Mammary epithelial cell (primary cell): ENCODE measurements at regions of chr6 and their contacts with region 1.

Region 1: GRCh38 chr6:27893059-27893835 is 18.9 kb downstream of the OR2B2 start:
- DNase-seq: peak; percentile 97
- H3K4me3 ChIP-seq: peak overlapping the region; percentile 66 to 84 (median 74)
- H3K27ac ChIP-seq: peak overlapping the region; percentile 86
- H3K4me1 ChIP-seq: peaks cover 11% of the 10 kb centered on the region
- H3K27me3 ChIP-seq: no peaks in the 10 kb centered on the region
- CTCF ChIP-seq: no peak

Region 2: GRCh38 chr6:27132532-27133280 is 760.5 kb before region 1 on chr6:
- CTCF ChIA-PET with region 1: no interaction called
- dilution Hi-C with region 1: loop called (anchors 25 kb)
- in situ Hi-C with region 1: no loop called
- intact Hi-C with region 1: loop called (anchors 1 kb)
- DNase-seq: peak; percentile 99
- H3K4me3 ChIP-seq: peak overlapping the region; percentile 64 to 69 (median 68)
- H3K27ac ChIP-seq: peak overlapping the region; percentile 97
- H3K4me1 ChIP-seq: peaks cover 13% of the 10 kb centered on the region
- H3K27me3 ChIP-seq: no peaks in the 10 kb centered on the region
- CTCF ChIP-seq: no peak

Region 3: GRCh38 chr6:27177485-27178406 is 715.5 kb before region 1 on chr6:
- CTCF ChIA-PET with region 1: no interaction called
- dilution Hi-C with region 1: no loop called
- in situ Hi-C with region 1: loop called (anchors 25 kb)
- intact Hi-C with region 1: no loop called
- DNase-seq: peak; percentile 88
- H3K4me3 ChIP-seq: peak overlapping the region; percentile 80 to 100 (median 96)
- H3K27ac ChIP-seq: peak overlapping the region; percentile 62
- H3K4me1 ChIP-seq: peaks cover 3% of the 10 kb centered on the region
- H3K27me3 ChIP-seq: no peaks in the 10 kb centered on the region
- CTCF ChIP-seq: peak; percentile 53 to 69

Region 4: DNA sequence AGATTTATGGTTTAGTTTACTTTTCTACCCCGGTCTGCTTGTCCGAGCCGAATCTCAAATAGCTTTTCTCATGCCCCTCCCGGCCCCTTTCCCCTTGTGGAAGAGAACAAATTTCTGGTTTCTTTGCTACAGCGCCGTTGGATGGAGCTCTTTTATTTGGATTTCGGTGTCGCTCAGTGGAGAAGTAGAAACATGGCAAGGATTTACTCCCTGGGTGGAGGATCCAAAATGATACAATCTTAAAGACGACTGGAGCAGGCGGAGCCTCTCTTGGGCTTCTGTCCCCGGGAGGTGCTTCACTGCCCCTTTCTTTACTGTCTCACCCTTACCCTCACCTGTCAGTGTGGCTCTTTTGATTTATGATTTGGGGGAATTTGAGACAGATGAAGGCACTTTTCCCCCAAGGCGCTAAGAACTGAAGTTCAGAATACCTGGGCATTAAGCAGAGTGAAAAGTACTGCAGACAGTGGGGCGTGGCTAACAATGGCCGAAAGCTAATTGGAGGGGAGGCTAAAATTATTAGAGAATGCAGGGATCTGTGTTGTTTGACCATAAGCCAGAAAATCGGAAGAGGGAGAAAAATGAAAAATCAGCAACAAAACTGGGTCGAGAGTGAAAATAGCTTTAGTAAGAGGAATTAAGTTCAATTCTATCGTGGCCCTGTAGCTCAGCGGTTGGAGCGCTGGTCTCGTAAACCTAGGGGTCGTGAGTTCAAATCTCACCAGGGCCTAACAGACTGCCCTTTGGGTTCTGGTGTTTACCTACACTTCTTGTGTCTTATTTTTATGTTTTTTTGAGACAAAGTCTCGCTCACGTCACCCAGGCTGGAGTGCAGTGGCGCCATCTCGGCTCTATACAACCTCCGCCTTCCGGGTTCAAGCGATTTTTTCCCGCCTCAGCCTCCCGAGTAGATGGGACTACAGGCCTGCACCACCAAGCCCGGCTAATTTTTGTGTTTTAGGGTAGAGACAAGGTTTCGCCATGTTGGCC is 275.3 kb before region 1 on chr6:
- CTCF ChIA-PET with region 1: no interaction called
- dilution Hi-C with region 1: no loop called
- in situ Hi-C with region 1: no loop called
- intact Hi-C with region 1: loop called (anchors 1 kb)
- DNase-seq: peak; percentile 64
- H3K4me3 ChIP-seq: peak overlapping the region; percentile 44 to 78 (median 64)
- H3K27ac ChIP-seq: peak overlapping the region; percentile 0
- H3K4me1 ChIP-seq: peaks cover 4% of the 10 kb centered on the region
- H3K27me3 ChIP-seq: no peaks in the 10 kb centered on the region
- CTCF ChIP-seq: peak in 1 of 2 donors; percentile 24

Region 5: DNA sequence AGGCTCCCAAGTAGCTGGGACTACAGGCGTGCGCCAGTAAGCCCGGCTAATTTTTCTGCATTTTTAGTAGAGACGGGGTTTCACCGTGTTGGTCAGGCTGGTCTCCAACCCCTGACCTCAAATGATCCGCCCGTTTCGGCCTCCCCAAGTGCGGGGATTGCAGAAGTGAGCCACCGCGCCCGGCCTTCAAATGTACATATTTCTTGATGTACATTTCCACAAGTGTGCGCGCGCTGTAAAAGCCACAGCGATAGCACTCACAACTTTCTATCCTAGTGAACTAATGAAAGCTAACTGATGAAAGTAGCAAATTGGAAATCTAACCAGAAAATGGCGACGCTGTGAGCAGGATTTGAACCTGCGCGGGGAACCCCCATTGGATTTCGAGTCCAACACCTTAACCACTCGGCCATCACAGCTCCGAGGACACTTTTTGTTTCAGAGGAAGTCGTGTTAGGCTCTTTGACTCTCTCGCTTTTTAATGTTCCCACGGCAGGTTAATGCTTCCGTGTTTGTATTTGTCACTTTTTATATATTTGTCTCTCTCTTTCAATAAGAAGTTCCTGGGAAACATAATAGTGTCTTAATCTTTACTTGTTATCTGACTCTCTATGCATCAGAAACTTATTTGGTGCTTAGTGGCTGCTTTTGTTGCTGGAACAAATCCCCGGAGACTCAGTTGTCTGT is 221.0 kb before region 1 on chr6:
- CTCF ChIA-PET with region 1: no interaction called
- dilution Hi-C with region 1: no loop called
- in situ Hi-C with region 1: no loop called
- intact Hi-C with region 1: no loop called
- DNase-seq: peak; percentile 74
- H3K4me3 ChIP-seq: peak overlapping the region; percentile 32 to 46 (median 41)
- H3K27ac ChIP-seq: no peak overlapping the region
- H3K4me1 ChIP-seq: peaks cover 20% of the 10 kb centered on the region
- H3K27me3 ChIP-seq: no peaks in the 10 kb centered on the region
- CTCF ChIP-seq: no peak

Region 6: GRCh38 chr6:27795697-27796494 is 97.4 kb before region 1 on chr6:
- CTCF ChIA-PET with region 1: no interaction called
- dilution Hi-C with region 1: no loop called
- in situ Hi-C with region 1: no loop called
- intact Hi-C with region 1: loop called (anchors 1 kb)
- DNase-seq: peak; percentile 83
- H3K4me3 ChIP-seq: no peak overlapping the region
- H3K27ac ChIP-seq: no peak overlapping the region
- H3K4me1 ChIP-seq: peaks cover 8% of the 10 kb centered on the region
- H3K27me3 ChIP-seq: no peaks in the 10 kb centered on the region
- CTCF ChIP-seq: peak; percentile 74 to 87

Region 7: DNA sequence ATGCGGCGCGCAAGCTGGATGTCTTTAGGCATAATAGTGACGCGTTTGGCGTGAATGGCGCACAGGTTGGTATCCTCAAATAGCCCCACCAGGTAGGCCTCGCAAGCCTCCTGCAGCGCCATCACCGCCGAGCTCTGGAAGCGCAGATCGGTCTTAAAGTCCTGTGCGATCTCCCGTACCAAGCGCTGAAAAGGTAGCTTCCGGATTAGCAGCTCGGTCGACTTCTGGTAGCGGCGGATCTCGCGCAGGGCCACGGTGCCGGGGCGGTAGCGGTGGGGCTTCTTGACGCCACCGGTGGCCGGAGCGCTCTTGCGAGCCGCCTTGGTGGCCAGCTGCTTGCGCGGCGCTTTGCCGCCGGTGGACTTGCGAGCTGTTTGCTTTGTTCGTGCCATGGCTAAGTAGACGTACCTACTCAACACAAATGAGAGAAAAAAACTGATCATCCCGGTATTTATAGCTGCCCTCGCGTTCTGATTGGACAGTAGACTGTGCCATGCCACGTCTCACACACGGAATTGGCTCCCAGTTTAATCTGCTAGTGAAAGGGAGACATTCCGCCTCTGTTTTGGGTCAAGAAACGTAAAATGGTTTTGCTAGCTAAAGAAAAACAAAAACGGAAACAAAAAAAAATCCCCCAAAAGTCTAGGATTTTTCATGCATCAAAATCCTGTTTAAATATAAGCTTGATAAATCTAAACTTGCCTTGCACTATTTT is 21.2 kb before region 1 on chr6:
- CTCF ChIA-PET with region 1: interaction called, 4 read pairs
- dilution Hi-C with region 1: no loop called
- in situ Hi-C with region 1: no loop called
- intact Hi-C with region 1: loop called (anchors 1 kb)
- DNase-seq: peak; percentile 94
- H3K4me3 ChIP-seq: peak overlapping the region; percentile 46 to 86 (median 63)
- H3K27ac ChIP-seq: peak overlapping the region; percentile 80
- H3K4me1 ChIP-seq: peaks cover 22% of the 10 kb centered on the region
- H3K27me3 ChIP-seq: no peaks in the 10 kb centered on the region
- CTCF ChIP-seq: peak; percentile 22 to 31

Region 8: DNA sequence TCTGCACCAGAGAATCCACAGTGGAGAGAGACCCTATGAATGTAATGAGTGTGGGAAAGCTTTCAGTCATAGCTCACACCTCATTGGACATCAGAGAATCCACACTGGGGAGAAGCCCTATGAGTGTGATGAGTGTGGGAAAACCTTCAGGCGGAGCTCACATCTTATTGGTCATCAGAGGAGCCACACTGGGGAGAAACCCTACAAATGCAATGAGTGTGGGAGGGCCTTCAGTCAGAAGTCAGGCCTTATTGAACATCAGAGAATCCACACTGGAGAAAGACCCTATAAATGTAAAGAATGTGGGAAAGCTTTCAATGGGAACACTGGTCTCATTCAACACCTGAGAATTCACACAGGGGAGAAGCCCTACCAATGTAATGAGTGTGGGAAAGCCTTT is 260.3 kb after region 1 on chr6:
- CTCF ChIA-PET with region 1: no interaction called
- dilution Hi-C with region 1: no loop called
- in situ Hi-C with region 1: no loop called
- intact Hi-C with region 1: no loop called
- DNase-seq: no peak
- H3K4me3 ChIP-seq: no peak overlapping the region
- H3K27ac ChIP-seq: no peak overlapping the region
- H3K4me1 ChIP-seq: no peaks in the 10 kb centered on the region
- H3K27me3 ChIP-seq: no peaks in the 10 kb centered on the region
- CTCF ChIP-seq: no peak